HCT116 (cell line): ENCODE measurements at regions of chr3 and their contacts with region 1.

Region 1: DNA sequence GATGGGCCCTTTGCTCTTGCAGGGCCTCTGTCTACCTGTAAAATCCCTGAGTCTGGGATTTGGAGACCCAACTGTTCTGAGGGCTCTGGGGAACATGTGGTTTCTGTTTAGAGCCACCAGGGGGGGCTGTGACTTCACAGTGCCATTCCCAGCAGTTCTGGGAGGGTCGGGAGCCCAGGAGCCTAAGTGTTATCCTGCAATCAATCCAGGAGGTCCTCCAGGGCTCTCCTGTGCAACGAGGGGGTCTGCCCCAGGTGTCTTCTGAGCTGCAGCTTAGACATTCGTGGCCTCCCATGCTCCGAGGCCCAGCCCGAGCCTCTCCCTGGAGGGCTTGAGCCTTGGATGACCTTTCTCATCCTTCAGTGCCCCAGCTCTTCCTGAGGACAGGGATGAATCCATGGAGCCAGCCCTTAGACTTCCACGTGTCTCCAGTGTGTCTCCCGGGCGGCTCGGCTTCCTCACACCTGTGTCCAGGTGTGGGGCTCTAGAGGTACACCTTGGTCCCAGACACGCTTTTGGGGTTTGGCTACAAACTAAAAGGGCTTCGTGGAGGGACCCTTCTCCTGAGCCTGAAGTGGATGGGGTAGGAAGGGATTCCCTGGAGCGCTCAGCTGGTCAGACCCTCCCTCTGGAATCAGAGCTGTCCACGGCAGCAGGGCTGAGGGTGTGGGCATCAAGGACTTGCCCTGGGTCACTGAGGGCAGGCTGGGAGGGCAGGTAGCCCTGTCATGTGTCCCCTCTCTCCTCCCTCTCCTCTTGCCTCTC is 20.3 kb upstream of the ABTB1 start:
- DNase-seq: peak; percentile 41
- ATAC-seq: peak; percentile 94
- H3K4me3 ChIP-seq: no peak overlapping the region
- H3K27ac ChIP-seq: no peak overlapping the region
- H3K4me1 ChIP-seq: peaks cover 3 to 15% of the 10 kb centered on the region in 2 experiments
- H3K27me3 ChIP-seq: no peaks in the 10 kb centered on the region
- CTCF ChIP-seq: peak; percentile 82 to 94 (median 91)
- POLR2A ChIP-seq: no peak
- RAD21 ChIP-seq: peak; percentile 97

Region 2: DNA sequence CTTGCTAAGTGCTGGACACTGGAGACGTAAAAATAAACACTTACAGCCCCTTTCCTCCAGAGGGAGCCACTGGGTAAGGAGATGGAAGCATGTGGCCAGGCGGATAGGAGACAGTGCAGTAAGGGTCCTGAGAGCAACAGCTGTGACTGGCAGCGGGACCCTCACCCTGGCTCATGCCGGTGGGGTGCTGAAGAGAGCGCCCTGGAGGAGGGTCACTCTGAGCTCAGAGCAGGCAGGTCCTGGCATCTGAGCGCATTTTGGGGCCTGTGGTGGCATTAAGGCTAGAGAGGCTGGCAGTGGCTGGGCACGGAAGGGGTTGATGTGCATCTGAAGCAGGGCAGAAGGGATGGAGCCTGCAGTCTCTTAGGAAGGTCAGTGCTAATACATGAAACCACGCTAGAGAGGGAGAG is 415.8 kb after region 1 on chr3:
- CTCF ChIA-PET with region 1: no interaction called
- POLR2A ChIA-PET with region 1: no interaction called
- RAD21 ChIA-PET with region 1: no interaction called
- intact Hi-C with region 1: loop called (anchors 10 kb)
- DNase-seq: peak; percentile 35
- ATAC-seq: peak; percentile 74
- H3K4me3 ChIP-seq: no peak overlapping the region
- H3K27ac ChIP-seq: no peak overlapping the region
- H3K4me1 ChIP-seq: no peaks in the 10 kb centered on the region
- H3K27me3 ChIP-seq: no peaks in the 10 kb centered on the region
- CTCF ChIP-seq: peak; percentile 37 to 78 (median 75); a peak in 5 of 6 replicates
- POLR2A ChIP-seq: no peak
- RAD21 ChIP-seq: peak; percentile 41; the same call in 1 of the 2 replicates